Caco-2 (cell line): ENCODE measurements at regions of chr4 and their contacts with region 1.

Region 1: DNA sequence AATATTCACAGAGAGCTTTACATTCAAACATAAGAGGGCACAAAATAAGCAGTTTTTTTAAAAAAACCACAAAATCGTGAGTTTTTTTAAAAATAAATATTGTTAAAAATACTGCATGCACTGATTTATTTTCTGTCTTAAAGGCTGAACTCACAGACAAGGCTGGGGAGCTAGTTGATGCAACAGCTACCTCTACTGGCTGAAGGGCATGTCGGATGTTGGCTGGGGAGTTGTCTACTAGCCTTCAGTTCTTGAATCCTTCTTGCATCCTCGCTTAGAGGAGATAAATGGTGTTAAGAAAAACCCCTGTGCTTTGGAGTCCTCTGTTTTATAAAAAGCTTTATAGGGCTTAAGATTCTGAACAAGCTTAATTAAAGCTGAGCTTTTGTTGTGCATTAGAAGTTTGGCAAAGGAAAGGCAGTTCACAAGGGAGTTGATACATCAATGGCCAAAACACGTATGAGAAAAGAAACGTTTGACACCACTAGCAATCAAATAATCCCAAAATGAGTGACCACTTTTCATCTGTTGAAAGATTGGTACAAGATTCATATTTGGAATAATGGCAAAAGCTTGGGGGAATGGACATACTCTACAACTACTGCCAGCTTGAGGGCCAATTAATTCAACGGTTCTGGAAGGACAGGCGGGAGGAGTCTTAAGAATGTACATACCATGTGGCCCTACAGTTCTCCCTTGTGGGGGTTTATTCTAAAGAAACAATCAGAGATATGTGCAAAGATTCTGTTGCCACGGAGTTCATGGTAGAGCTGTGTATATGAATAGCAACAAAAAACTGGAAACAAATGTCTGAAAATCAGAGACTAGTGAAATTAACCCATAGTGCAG is 94.7 kb downstream of the SEL1L3 start:
- DNase-seq: peak; percentile 55 to 66
- H3K4me3 ChIP-seq: no peak overlapping the region
- H3K4me3 Mint-ChIP-seq: no peak overlapping the region
- H3K27ac Mint-ChIP-seq: no peak overlapping the region
- H3K4me1 ChIP-seq: no peaks in the 10 kb centered on the region
- H3K4me1 Mint-ChIP-seq: no peaks in the 10 kb centered on the region
- H3K27me3 ChIP-seq: no peaks in the 10 kb centered on the region
- H3K27me3 Mint-ChIP-seq: no peaks in the 10 kb centered on the region
- CTCF ChIP-seq: peak; percentile 82 to 90

Region 2: GRCh38 chr4:25500626-25501316 is 267.3 kb before region 1 on chr4:
- CTCF ChIA-PET with region 1: no interaction called
- POLR2A ChIA-PET with region 1: no interaction called
- intact Hi-C with region 1: loop called (anchors 10 kb)
- DNase-seq: no peak
- H3K4me3 ChIP-seq: no peak overlapping the region
- H3K4me3 Mint-ChIP-seq: no peak overlapping the region
- H3K27ac Mint-ChIP-seq: no peak overlapping the region
- H3K4me1 ChIP-seq: no peaks in the 10 kb centered on the region
- H3K4me1 Mint-ChIP-seq: no peaks in the 10 kb centered on the region
- H3K27me3 ChIP-seq: no peaks in the 10 kb centered on the region; the same call in 1 of the 2 replicates
- H3K27me3 Mint-ChIP-seq: no peaks in the 10 kb centered on the region
- CTCF ChIP-seq: no peak

Region 3: GRCh38 chr4:25654971-25655963 is 112.8 kb before region 1 on chr4 and contains the start of gene SLC34A2:
- CTCF ChIA-PET with region 1: no interaction called
- POLR2A ChIA-PET with region 1: no interaction called
- intact Hi-C with region 1: loop called (anchors 5 kb)
- DNase-seq: peak; percentile 78 to 87
- H3K4me3 ChIP-seq: peak within 1 kb of the TSS; percentile 40
- H3K4me3 Mint-ChIP-seq: peak within 1 kb of the TSS; percentile 84
- H3K27ac Mint-ChIP-seq: peak within 1 kb of the TSS; percentile 84
- H3K4me1 ChIP-seq: peaks cover 29% of the 10 kb centered on the region
- H3K4me1 Mint-ChIP-seq: peaks cover 25% of the 10 kb centered on the region
- H3K27me3 ChIP-seq: no peaks in the 10 kb centered on the region
- H3K27me3 Mint-ChIP-seq: no peaks in the 10 kb centered on the region
- CTCF ChIP-seq: peak in 1 of 2 experiments; percentile 25
- total RNA-seq, gene SLC34A2: 13.6 and 19.9 TPM in 2 replicates

Region 4: GRCh38 chr4:25993395-25994185 is 225.5 kb after region 1 on chr4:
- CTCF ChIA-PET with region 1: no interaction called
- POLR2A ChIA-PET with region 1: no interaction called
- intact Hi-C with region 1: no loop called
- DNase-seq: peak in 1 of 2 experiments; percentile 42
- H3K4me3 ChIP-seq: no peak overlapping the region
- H3K4me3 Mint-ChIP-seq: no peak overlapping the region
- H3K27ac Mint-ChIP-seq: no peak overlapping the region
- H3K4me1 ChIP-seq: no peaks in the 10 kb centered on the region
- H3K4me1 Mint-ChIP-seq: no peaks in the 10 kb centered on the region
- H3K27me3 ChIP-seq: no peaks in the 10 kb centered on the region
- H3K27me3 Mint-ChIP-seq: no peaks in the 10 kb centered on the region
- CTCF ChIP-seq: peak in 1 of 2 experiments; percentile 43

Region 5: DNA sequence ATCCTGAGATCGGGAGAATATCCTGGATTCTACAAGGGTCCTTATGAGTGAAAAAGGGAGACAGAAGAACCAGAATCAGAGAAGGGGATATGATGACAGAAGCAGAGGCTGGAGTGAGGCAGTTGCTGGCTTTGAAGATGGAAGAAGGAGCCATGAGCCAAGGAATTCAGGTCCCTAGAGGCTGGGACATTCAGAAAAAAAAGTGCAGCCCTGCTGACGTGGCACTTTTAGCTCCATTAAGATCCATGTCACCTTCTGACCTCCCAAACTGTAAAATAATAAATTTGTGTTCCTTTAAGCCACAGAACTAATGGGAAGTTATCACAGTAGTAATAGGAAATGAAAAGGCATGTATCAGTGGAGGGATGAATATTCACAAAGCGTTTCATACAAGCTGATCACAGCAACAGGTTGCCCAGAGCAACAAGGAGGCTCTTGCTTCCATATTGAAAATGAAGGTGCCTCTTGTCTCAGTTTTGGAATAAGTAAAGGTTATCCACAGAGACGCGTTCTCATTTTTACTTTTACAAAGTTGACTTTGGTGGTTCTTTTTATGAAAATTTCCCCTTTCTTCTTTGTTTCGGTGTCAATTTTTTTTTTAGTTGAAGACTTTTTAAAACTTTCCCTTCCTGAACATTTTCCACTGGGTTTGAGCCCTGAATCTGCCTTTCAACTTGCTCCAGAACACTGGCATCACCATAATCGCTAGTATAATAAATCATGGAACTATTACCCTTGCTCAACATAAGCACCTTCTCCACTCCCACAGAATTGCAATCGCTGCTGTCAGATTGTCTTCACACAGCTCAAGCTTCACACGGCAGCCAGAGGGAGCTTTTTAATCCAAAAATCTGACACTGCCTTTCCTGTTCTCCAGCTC is 425.0 kb after region 1 on chr4:
- CTCF ChIA-PET with region 1: no interaction called
- POLR2A ChIA-PET with region 1: no interaction called
- intact Hi-C with region 1: no loop called
- DNase-seq: no peak
- H3K4me3 ChIP-seq: no peak overlapping the region
- H3K4me3 Mint-ChIP-seq: no peak overlapping the region
- H3K27ac Mint-ChIP-seq: no peak overlapping the region
- H3K4me1 ChIP-seq: no peaks in the 10 kb centered on the region
- H3K4me1 Mint-ChIP-seq: no peaks in the 10 kb centered on the region
- H3K27me3 ChIP-seq: no peaks in the 10 kb centered on the region
- H3K27me3 Mint-ChIP-seq: no peaks in the 10 kb centered on the region
- CTCF ChIP-seq: no peak